PC-9 (cell line): ENCODE measurements at regions of chr6 and their contacts with region 1.

Region 1: DNA sequence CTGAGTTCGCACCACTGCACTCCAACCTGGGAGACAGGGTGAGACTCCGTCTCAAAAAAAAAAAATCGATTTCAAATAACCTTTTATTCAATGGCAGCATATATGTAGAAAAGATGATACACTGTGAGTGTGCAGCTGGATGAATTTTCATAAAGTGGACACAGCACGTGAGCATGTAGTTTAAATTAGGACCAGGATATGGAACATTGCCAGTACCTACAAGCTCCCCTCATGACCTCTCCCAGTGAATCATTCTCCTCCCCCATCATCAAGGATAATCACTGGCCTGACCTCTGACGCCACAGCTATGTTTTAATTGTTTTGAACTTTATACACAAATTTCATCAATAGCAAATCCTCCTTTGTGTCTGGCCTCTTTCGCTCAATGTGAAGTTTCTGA is 53.8 kb upstream of the HDAC2 start:
- DNase-seq: no peak
- H3K4me3 ChIP-seq: no peak overlapping the region
- H3K27ac ChIP-seq: no peak overlapping the region
- H3K4me1 ChIP-seq: no peaks in the 10 kb centered on the region
- H3K27me3 ChIP-seq: no peaks in the 10 kb centered on the region
- CTCF ChIP-seq: no peak

Region 2: GRCh38 chr6:114061741-114062140 is 37.0 kb after region 1 on chr6:
- CTCF ChIA-PET with region 1: no interaction called
- POLR2A ChIA-PET with region 1: interaction called, 10 read pairs
- intact Hi-C with region 1: no loop called
- DNase-seq: no peak
- H3K4me3 ChIP-seq: no peak overlapping the region
- H3K27ac ChIP-seq: no peak overlapping the region
- H3K4me1 ChIP-seq: no peaks in the 10 kb centered on the region
- H3K27me3 ChIP-seq: no peaks in the 10 kb centered on the region
- CTCF ChIP-seq: no peak